ENCODE measurements at regions of chr22 and their contacts with region 1.

Region 1: GRCh38 chr22:41146573-41146972 is 54.2 kb downstream of the EP300 start:
- DNase-seq: no peak
- ATAC-seq: no peak
- H3K4me3 ChIP-seq: no peak overlapping the region
- H3K27ac ChIP-seq: no peak overlapping the region
- H3K4me1 ChIP-seq: no peaks in the 10 kb centered on the region
- H3K27me3 ChIP-seq: no peaks in the 10 kb centered on the region
- CTCF ChIP-seq: no peak

Region 2: GRCh38 chr22:40838486-40838885 is 308.1 kb before region 1 on chr22:
- intact Hi-C with region 1: loop called in 1 of 10 experiments (anchors 10 kb)
- DNase-seq: no peak
- ATAC-seq: no peak
- H3K4me3 ChIP-seq: no peak overlapping the region
- H3K27ac ChIP-seq: no peak overlapping the region
- H3K4me1 ChIP-seq: no peaks in the 10 kb centered on the region
- H3K27me3 ChIP-seq: no peaks in the 10 kb centered on the region
- CTCF ChIP-seq: no peak

Region 3: GRCh38 chr22:41015003-41015402 is 131.6 kb before region 1 on chr22:
- intact Hi-C with region 1: no loop called
- DNase-seq: no peak
- ATAC-seq: no peak
- H3K4me3 ChIP-seq: no peak overlapping the region
- H3K27ac ChIP-seq: no peak overlapping the region
- H3K4me1 ChIP-seq: peaks cover 0 to 13% (median 0%) of the 10 kb centered on the region in 9 donors
- H3K27me3 ChIP-seq: no peaks in the 10 kb centered on the region
- CTCF ChIP-seq: no peak

Region 4: GRCh38 chr22:41127451-41127850 is 19.1 kb before region 1 on chr22:
- intact Hi-C with region 1: loop called in 1 of 10 experiments (anchors 1 kb)
- DNase-seq: no peak
- ATAC-seq: peak in 1 of 8 donors; percentile 44
- H3K4me3 ChIP-seq: no peak overlapping the region
- H3K27ac ChIP-seq: no peak overlapping the region
- H3K4me1 ChIP-seq: peaks cover 0 to 15% (median 0%) of the 10 kb centered on the region in 9 donors
- H3K27me3 ChIP-seq: no peaks in the 10 kb centered on the region
- CTCF ChIP-seq: no peak

Measured in heart right ventricle (tissue), 16 donors.